SK-N-SH (cell line): ENCODE measurements at regions of chr1 and their contacts with region 1.

Region 1: GRCh38 chr1:66996018-66996682 is 57.8 kb downstream of the SLC35D1 start:
- DNase-seq: peak; percentile 48
- H3K4me3 ChIP-seq: peak overlapping the region in 1 of 2 experiments; percentile 28; a peak in 1 of 4 replicates
- H3K27ac ChIP-seq: no peak overlapping the region
- H3K4me1 ChIP-seq: peaks cover 0 to 3% of the 10 kb centered on the region in 2 experiments; a peak in 1 of 4 replicates
- H3K27me3 ChIP-seq: no peaks in the 10 kb centered on the region
- CTCF ChIP-seq: peak; percentile 83
- EP300 ChIP-seq: no peak
- RAD21 ChIP-seq: peak; percentile 91

Region 2: GRCh38 chr1:66764994-66765578 is 231.1 kb before region 1 on chr1:
- CTCF ChIA-PET with region 1: interaction called, 33 read pairs
- POLR2A ChIA-PET with region 1: no interaction called
- DNase-seq: peak; percentile 42
- H3K4me3 ChIP-seq: no peak overlapping the region
- H3K27ac ChIP-seq: no peak overlapping the region
- H3K4me1 ChIP-seq: no peaks in the 10 kb centered on the region; a peak in 1 of 4 replicates
- H3K27me3 ChIP-seq: no peaks in the 10 kb centered on the region
- CTCF ChIP-seq: peak; percentile 90
- EP300 ChIP-seq: no peak
- RAD21 ChIP-seq: peak; percentile 91

Region 3: DNA sequence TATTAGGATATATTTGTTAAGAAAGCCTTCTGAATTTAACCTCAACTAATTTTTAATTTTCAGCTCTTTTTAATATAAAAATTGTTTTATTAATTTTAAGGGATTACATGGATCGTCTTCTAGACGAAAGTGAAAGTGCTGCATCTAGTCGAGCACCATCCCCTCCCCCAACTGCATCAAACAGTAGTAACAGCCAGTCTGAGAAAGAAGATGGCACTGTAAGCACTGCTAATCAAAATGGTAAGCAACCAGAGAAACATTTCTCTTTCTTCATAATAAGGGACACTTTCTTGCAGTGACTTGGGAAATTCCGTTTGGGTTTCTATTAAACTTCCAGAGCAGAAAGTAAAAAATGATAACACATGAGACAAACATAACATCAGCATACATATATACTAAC is 14.5 kb before region 1 on chr1:
- CTCF ChIA-PET with region 1: interaction called, 12 read pairs
- POLR2A ChIA-PET with region 1: no interaction called
- DNase-seq: no peak
- H3K4me3 ChIP-seq: no peak overlapping the region; a peak in 1 of 4 replicates
- H3K27ac ChIP-seq: no peak overlapping the region
- H3K4me1 ChIP-seq: no peaks in the 10 kb centered on the region; a peak in 1 of 4 replicates
- H3K27me3 ChIP-seq: no peaks in the 10 kb centered on the region
- CTCF ChIP-seq: no peak
- EP300 ChIP-seq: no peak
- RAD21 ChIP-seq: no peak

Region 4: DNA sequence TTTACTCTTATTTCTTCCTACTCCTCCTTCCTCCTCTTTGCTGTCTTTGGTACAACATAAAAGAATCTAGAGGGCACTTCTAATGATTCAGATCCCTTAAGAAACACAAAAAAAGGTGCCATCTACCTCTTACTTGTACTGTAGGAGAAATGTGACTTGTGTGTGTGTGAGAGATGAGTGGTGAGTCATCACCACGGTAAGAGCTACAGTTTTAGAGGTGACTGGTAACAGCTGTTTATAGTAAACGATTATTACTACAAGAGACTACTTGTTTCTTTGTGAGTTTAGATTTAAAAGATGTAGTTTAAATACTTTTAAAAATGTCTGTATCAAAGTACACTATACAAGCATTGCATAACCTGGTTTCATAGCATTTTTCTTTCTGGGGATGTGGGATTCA is 17.4 kb after region 1 on chr1:
- CTCF ChIA-PET with region 1: interaction called, 13 read pairs
- POLR2A ChIA-PET with region 1: no interaction called
- DNase-seq: no peak
- H3K4me3 ChIP-seq: no peak overlapping the region
- H3K27ac ChIP-seq: no peak overlapping the region
- H3K4me1 ChIP-seq: no peaks in the 10 kb centered on the region; a peak in 1 of 4 replicates
- H3K27me3 ChIP-seq: no peaks in the 10 kb centered on the region
- CTCF ChIP-seq: no peak
- EP300 ChIP-seq: no peak
- RAD21 ChIP-seq: no peak

Region 5: GRCh38 chr1:67140460-67140859 is 144.3 kb after region 1 on chr1:
- CTCF ChIA-PET with region 1: interaction called, 10 read pairs
- POLR2A ChIA-PET with region 1: no interaction called
- DNase-seq: no peak
- H3K4me3 ChIP-seq: no peak overlapping the region
- H3K27ac ChIP-seq: no peak overlapping the region
- H3K4me1 ChIP-seq: no peaks in the 10 kb centered on the region
- H3K27me3 ChIP-seq: no peaks in the 10 kb centered on the region
- CTCF ChIP-seq: no peak
- EP300 ChIP-seq: no peak
- RAD21 ChIP-seq: no peak

Region 6: DNA sequence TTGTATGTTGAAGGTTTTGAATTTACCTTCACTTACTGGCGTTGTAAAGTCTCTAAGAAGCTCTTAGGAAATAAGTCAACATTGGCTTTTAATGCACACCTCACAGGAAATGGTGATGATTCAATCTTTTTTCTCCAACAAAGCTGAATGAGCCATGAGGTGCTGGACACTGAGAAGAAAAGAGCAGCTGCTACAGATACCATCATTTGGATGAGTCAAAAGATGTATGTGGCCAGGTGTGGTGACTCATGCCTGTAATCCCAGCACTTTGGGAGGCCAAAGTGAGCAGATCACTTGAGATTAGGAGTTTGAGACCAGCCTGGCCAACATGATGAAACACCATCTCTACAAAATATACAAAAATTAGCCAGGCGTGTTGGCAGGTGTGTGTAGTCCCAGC is 166.8 kb after region 1 on chr1:
- CTCF ChIA-PET with region 1: interaction called, 10 read pairs
- POLR2A ChIA-PET with region 1: no interaction called
- DNase-seq: no peak
- H3K4me3 ChIP-seq: no peak overlapping the region
- H3K27ac ChIP-seq: no peak overlapping the region
- H3K4me1 ChIP-seq: no peaks in the 10 kb centered on the region
- H3K27me3 ChIP-seq: no peaks in the 10 kb centered on the region
- CTCF ChIP-seq: no peak
- EP300 ChIP-seq: peak in 1 of 2 experiments; percentile 56; a peak in 1 of 4 replicates
- RAD21 ChIP-seq: no peak

Region 7: GRCh38 chr1:67214420-67215174 is 218.4 kb after region 1 on chr1:
- CTCF ChIA-PET with region 1: interaction called, 67 read pairs
- POLR2A ChIA-PET with region 1: no interaction called
- DNase-seq: no peak
- H3K4me3 ChIP-seq: no peak overlapping the region; a peak in 1 of 4 replicates
- H3K27ac ChIP-seq: no peak overlapping the region
- H3K4me1 ChIP-seq: no peaks in the 10 kb centered on the region; a peak in 1 of 4 replicates
- H3K27me3 ChIP-seq: no peaks in the 10 kb centered on the region
- CTCF ChIP-seq: peak; percentile 70
- EP300 ChIP-seq: no peak
- RAD21 ChIP-seq: peak; percentile 37; the same call in 1 of the 2 replicates